ENCODE measurements at regions of chr4 and their contacts with region 1.

Region 1: DNA sequence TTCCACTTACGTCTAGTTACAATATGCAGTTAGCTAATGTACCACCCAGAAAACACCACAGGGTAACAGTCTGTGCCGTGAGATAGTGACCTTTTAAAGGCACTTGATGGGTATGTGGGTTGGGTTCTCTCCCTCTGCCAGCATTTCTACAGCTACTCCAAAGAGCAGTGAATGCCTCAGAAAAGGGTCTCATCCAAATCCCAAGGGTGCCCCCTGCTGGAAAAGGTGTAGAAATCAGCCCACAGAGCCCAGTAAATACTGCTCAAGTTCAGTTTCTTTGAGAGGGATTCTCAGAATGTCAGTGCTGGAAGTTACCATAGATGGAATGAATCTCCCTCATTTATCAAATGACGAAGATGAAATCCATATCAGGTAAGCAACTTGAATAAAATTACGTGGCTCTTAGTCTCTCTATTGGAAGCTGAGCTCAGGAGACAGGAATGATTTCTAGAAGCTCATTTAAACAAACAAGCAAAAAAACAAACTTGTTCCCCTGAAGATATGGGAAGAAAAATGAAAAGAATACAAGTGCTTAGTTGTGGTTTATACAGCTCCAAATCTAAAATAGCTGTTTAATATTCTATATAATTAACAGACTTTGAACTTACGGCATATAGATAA is 9.5 kb downstream of the RNF175 start:
- DNase-seq: peak in 1 of 2 donors; percentile 59
- ATAC-seq: peak in 7 of 8 donors; percentile 52 to 81 (median 72)
- H3K4me3 ChIP-seq: no peak overlapping the region
- H3K27ac ChIP-seq: no peak overlapping the region
- H3K4me1 ChIP-seq: peaks cover 0 to 31% (median 0%) of the 10 kb centered on the region in 9 donors
- H3K27me3 ChIP-seq: peaks cover 0 to 4% (median 0%) of the 10 kb centered on the region in 7 donors
- CTCF ChIP-seq: peak; percentile 33 to 78 (median 65)

Region 2: GRCh38 chr4:153634738-153635353 is 115.5 kb before region 1 on chr4:
- intact Hi-C with region 1: loop called (anchors 1 to 10 kb)
- DNase-seq: no peak
- ATAC-seq: peak in 3 of 8 donors; percentile 35 to 59 (median 41)
- H3K4me3 ChIP-seq: no peak overlapping the region
- H3K27ac ChIP-seq: no peak overlapping the region
- H3K4me1 ChIP-seq: no peaks in the 10 kb centered on the region
- H3K27me3 ChIP-seq: no peaks in the 10 kb centered on the region
- CTCF ChIP-seq: peak; percentile 46 to 72 (median 65)